HAP-1 (cell line): ENCODE measurements at regions of chr5 and their contacts with region 1.

Region 1: DNA sequence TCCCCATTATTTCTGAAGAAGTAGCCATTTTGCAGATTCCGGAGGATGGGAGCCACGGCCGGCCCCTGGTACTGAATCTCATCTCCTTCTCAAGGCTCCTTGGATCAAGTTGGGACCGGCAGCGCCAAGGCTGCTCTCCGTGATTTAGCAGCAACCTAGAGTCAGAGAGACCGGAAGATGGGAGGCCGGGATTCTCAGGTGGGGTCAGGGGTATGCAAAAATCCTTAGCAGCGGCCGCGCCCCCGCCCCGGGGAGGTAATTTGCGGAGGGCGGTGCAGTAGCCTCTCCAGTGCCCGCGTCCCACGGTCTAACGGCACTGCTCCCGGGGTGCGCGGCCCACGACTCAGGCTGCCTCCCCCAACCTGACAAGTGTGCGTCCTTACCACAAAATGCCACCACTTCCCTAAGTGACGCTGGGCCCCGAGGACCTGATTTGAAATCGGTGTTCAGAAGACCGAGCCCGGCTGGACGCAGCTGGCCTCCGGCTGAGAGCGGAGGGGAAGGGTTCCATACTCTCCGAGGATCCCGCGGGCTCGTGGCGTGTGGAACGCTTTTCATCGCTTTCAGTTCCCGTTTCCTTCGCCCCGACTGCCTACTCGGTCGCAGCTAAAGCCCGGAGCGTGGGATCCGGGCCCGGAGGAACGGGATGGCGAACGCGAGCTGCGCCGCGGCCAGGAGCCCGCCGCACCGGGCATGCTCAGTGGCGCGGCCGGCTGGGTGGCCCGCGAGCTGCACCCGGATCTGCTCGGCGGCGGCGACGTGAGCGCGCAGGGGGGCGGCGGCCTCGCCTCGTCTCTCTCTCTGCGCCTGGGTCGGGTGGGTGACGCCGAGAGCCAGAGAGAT is at the start of gene SCAMP1:
- DNase-seq: peak; percentile 89 to 92
- H3K4me3 ChIP-seq: peak within 1 kb of the TSS; percentile 92
- H3K4me1 ChIP-seq: peaks cover 40% of the 10 kb centered on the region
- H3K27me3 ChIP-seq: no peaks in the 10 kb centered on the region

Region 2: DNA sequence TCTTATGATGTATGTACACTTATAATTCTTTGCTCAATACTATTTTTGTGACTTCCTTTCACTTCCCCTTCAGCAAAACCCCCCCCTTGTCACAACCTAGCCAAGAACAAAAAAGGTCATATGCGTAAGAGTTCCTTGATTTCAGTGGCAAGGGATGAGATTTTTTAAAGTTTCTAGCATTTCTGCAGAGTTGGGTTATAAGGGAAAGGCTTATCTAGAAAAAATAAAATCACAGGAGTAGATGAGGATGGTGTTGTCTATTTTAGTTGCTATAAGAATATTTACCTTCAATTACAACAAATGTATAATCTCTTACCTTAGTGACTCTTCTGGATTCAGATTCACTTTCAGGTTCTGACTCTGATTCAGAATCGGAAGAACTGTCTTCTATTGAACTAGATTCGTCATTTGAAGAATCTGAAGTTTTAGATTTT is 250.1 kb before region 1 on chr5:
- in situ Hi-C with region 1: no loop called
- DNase-seq: no peak
- H3K4me3 ChIP-seq: no peak overlapping the region
- H3K4me1 ChIP-seq: peaks cover 10% of the 10 kb centered on the region
- H3K27me3 ChIP-seq: no peaks in the 10 kb centered on the region

Region 3: DNA sequence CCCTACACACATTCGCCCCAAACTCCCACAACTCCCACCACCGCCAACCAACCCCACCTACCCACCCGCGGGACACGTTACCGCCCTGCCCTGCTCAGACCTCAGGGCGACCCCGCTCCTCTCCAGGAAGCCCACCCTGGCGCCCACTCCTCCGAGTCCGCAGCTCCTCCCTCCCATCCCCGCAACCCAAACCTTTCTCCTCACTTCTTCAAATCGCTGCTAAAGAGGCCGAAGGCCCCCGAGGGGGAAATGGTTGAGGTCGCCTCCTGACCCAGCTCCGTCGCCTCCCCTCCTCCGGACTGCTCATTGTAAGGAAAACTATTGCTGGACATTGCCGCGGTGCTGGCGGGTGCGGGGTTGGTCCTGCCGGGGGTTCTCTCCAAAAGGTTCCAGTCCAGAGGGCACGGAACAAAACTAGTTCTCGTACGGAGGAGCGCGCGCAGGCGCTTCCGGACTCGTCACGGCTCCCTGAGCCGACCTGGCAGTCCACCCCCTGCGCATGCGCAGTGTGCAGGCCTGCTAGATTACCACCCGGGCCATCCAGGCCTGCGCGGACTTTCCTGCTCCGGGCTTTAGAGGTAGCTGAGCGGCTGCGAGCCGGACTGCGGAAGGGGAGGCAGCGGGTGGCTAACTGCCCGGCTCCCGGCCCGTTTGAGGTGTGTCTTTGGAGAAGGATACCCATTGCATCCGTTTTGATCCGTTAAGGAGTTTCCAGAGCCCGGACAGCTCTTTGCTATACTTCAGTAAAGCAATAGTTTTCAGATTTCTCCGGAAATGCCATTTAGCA is 65.6 kb before region 1 on chr5 and contains the start of gene AP3B1:
- in situ Hi-C with region 1: loop called (anchors 5 kb)
- DNase-seq: peak; percentile 95 to 99
- H3K4me3 ChIP-seq: peak within 1 kb of the TSS; percentile 77
- H3K4me1 ChIP-seq: peaks cover 26% of the 10 kb centered on the region
- H3K27me3 ChIP-seq: no peaks in the 10 kb centered on the region

Region 4: DNA sequence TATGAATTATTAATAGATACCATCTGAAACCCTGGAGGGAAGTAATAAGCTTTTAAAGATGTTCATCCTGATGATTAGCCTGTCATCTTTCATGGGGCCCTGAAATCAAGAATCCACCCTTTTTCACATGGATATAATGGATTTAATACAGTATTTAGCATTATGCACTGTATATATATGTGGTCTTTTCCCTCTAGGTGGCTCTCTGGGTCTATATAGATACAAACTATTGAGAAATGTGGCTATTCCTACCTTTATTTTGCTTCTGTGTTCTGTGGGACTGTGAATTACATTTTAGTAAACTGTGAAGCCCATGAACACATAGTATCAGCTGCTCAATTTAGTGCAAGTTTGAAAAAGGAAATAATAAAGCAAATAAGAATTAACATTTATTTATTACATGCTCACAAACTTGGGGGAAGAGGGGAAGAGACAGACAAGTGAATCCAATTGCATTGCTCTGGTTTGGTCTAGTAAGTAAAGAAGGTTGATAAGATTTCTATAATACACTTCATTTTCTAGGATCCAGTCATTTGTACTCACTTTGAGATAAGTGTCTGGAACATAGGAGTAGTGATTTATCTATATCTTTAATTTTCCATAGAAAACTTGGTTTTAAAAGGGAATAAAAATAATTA is 112.5 kb after region 1 on chr5:
- in situ Hi-C with region 1: no loop called
- DNase-seq: peak in 1 of 2 experiments; percentile 5
- H3K4me3 ChIP-seq: no peak overlapping the region
- H3K4me1 ChIP-seq: no peaks in the 10 kb centered on the region
- H3K27me3 ChIP-seq: no peaks in the 10 kb centered on the region